ENCODE measurements at regions of chr6 and their contacts with region 1.

Region 1: DNA sequence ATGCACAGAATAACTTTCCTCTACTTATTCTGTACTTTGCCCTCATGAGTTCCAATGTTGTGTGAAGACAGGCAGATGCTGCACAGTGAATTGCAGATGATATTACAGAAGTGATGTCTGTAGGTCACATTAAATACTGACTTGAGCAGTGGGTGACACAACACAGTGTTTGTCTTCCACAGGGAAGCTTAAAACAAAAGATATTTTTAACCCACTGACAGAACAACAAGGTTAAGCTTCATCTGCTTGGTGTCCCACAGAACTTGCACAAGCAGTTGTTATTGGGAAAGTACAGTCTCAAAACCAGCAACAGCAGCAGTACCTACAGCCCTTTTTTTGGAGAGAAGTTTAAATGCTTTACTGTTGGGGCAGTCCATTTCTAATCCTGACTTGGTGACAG is 10.5 kb downstream of the SUMO4 start:
- DNase-seq: no peak

Region 2: DNA sequence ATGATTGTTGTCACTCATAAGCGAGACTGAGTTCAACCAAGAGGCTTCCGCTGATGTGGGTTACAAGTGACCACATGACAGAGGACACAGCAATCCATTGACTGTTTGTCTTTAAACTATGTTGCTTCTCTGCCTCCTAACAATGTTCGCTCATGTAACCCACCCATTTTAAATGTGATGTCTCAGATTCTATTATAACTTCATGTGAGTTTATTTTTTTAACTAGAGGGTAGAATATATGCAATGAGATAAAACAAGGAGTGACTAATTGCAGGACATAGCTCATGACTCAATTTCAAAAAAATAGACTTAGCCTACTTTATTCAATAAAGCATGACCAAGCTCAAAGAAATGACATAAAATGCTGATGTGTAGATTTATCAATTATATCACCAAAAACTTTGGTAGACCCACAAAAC is 1187.1 kb before region 1 on chr6:
- intact Hi-C with region 1: loop called in 1 of 2 experiments (anchors 5 kb)
- DNase-seq: no peak